ENCODE measurements at regions of chr2 and their contacts with region 1.

Region 1: DNA sequence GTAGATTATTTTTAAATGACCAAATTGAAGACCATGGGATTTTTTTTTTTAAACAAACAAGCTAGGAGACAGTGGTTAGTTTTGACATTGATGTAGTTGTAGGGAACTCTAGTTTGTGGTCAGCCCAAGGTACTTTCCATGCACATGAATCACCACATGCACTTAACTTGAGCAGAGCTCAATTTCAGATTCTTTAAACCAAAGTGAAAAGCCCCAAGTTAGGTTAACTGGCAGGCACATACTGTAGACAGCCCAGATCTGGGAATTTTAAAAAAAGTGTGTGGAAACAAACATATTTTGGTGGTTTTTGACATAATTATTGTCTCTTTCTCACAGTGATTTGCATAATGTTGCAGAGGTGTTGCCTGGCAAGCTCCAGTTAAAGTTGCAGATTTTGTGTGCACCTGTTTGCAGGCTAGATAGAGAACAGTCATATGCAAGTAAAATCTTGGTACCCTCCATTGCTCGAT is 88.4 kb downstream of the BCL2L11 start:
- DNase-seq: peak; percentile 84
- H3K4me3 Mint-ChIP-seq: peak overlapping the region; percentile 19
- H3K27ac Mint-ChIP-seq: peak overlapping the region; percentile 76
- H3K4me1 Mint-ChIP-seq: peaks cover 35% of the 10 kb centered on the region
- H3K27me3 Mint-ChIP-seq: peaks cover 3% of the 10 kb centered on the region

Region 2: DNA sequence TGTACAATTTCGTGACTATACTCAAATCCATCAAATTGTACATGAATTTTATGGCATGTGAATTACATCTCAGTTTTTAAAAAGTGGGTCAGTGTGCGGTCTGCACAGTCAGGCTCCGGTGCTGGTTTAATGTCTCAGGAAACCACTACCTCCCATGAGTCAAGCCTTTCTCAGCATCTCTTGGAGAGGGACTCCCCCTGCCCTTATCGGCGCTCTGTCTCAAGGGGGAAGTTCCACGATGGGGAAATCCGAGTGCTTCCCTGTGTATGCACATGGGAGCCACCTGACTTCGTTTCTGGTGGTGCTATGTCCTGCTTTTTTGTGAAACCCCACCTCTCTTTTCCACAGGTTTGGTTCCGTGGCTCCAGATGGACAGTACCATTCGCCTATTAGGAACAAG is 404.2 kb before region 1 on chr2:
- intact Hi-C with region 1: loop called (anchors 10 kb)
- DNase-seq: peak; percentile 82
- H3K4me3 Mint-ChIP-seq: peak overlapping the region; percentile 12
- H3K27ac Mint-ChIP-seq: peak overlapping the region; percentile 18
- H3K4me1 Mint-ChIP-seq: peaks cover 17% of the 10 kb centered on the region
- H3K27me3 Mint-ChIP-seq: peaks cover 55% of the 10 kb centered on the region

Region 3: GRCh38 chr2:111168528-111169239 is 40.4 kb before region 1 on chr2:
- intact Hi-C with region 1: loop called (anchors 2 kb)
- DNase-seq: peak; percentile 87
- H3K4me3 Mint-ChIP-seq: peak overlapping the region; percentile 4
- H3K27ac Mint-ChIP-seq: peak overlapping the region; percentile 70
- H3K4me1 Mint-ChIP-seq: peaks cover 36% of the 10 kb centered on the region
- H3K27me3 Mint-ChIP-seq: peaks cover 17% of the 10 kb centered on the region

Region 4: DNA sequence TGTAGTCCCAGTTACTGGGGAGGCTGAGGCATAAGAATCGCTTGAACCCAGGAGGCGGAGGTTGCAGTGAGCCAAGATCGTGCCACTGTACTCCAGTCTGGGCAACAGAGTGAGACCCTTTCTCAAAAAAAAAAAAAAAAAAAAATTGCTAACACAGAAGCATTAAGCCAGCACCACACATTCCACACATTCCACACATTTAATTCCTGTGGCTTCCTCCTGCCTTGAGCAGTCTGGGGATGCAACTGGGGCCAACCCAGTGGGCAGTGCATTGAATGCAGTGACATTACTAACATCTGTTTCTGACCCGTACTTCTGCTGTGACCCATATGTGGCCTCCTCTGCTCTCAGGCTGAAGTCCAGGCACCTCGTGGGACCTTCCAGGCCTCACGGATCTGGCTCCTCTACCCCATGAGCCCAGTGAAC is 18.6 kb after region 1 on chr2:
- intact Hi-C with region 1: no loop called
- DNase-seq: peak; percentile 28
- H3K4me3 Mint-ChIP-seq: no peak overlapping the region
- H3K27ac Mint-ChIP-seq: peak overlapping the region; percentile 34
- H3K4me1 Mint-ChIP-seq: peaks cover 8% of the 10 kb centered on the region
- H3K27me3 Mint-ChIP-seq: peaks cover 14% of the 10 kb centered on the region

Region 5: DNA sequence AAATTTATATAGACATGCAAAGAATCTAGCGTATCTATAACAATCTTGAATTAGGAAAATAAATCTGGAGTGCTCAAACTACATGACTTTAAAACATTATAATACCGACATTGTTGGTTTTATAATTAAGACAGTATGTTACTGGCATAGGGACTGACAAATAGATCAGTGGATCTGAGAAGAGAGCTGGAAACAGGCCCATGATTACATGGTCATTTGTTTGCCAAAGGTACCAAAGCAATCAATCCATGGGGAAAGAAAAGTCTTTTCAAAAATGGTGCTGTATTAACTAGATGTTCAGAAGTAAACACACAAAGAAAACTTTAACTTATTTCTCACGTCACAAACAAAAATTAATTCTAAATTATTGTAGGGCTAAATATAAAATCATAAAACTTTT is 35.8 kb after region 1 on chr2:
- intact Hi-C with region 1: loop called (anchors 5 kb)
- DNase-seq: no peak
- H3K4me3 Mint-ChIP-seq: no peak overlapping the region
- H3K27ac Mint-ChIP-seq: no peak overlapping the region
- H3K4me1 Mint-ChIP-seq: peaks cover 8% of the 10 kb centered on the region
- H3K27me3 Mint-ChIP-seq: no peaks in the 10 kb centered on the region

Measured in activated CD4-positive, alpha-beta T cell treated with anti-CD3 and anti-CD28 coated beads, Interleukin-2, amount 10 ng/mL, durations not matched to agents 24 days and 14 days (primary cell).